H1 (cell line): ENCODE measurements at regions of chr1 and their contacts with region 1.

Region 1: DNA sequence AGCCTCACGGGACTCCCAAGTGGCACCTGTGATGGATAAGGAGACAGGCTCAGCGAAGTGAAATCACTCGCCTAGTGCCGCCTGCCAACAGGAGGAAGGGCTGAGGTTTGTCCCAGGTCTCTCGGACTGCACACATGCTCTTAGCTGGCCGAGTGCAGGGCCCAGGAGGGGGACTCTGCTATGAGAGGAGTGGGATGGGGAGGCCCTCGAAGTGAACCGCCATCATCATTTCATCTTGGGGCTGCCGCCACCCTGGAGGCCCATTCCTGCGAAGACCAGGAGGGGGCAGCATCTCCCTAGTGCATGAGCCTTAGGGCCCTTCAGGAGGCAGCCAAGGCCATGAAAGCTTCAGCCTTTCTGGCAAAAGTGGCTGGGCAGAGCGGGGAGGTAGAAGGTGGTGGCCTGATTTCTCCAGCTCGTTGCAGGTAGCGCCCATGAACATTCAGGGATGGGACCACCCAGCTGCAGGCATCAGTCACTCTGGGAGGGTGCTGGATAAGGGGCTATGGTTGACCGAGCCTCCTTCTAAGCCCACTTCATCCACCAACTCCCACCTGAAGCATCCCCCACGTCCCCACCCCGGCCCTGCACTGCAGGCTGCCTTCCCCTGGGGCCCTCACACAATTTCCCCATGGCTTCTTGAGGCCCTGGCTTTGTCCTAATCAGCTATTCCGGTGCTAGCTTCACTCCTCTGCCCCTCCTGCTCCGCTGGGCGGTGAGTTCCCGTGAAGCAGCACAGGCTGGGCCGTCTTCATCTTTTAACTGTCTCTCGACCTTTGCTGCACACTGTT is 17.2 kb upstream of the RASSF5 start:
- DNase-seq: peak; percentile 56 to 97
- H3K4me3 ChIP-seq: no peak overlapping the region
- H3K27ac ChIP-seq: no peak overlapping the region
- H3K4me1 ChIP-seq: no peaks in the 10 kb centered on the region
- H3K27me3 ChIP-seq: no peaks in the 10 kb centered on the region
- CTCF ChIP-seq: peak; percentile 96 to 99 (median 98)
- EP300 ChIP-seq: no peak
- POLR2A ChIP-seq: no peak
- RAD21 ChIP-seq: peak; percentile 95 to 97

Region 2: DNA sequence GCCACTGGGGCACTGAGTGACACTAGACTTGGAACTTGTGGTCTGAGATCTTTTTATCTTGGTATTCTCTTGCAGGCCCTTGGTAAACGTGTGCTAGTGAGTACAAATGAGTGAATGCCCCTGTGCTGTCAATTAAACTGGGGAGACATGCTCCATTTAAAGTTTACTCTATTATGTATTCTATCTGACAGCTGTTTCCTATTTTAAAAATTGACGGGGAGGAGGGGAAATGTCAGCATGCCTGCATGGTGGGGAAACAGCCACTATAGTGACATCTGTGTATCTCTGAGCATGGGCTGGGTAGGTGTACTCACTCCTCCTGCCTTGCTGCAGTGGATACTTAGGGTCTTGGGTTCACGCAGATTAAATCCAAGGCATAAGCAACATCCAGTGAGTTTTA is 78.9 kb before region 1 on chr1:
- CTCF ChIA-PET with region 1: no interaction called
- POLR2A ChIA-PET with region 1: no interaction called
- DNase-seq: no peak
- H3K4me3 ChIP-seq: no peak overlapping the region
- H3K27ac ChIP-seq: no peak overlapping the region
- H3K4me1 ChIP-seq: no peaks in the 10 kb centered on the region
- H3K27me3 ChIP-seq: peaks cover 0 to 1% (median 0%) of the 10 kb centered on the region in 4 experiments; a peak in 1 of 7 replicates
- CTCF ChIP-seq: no peak
- EP300 ChIP-seq: no peak
- POLR2A ChIP-seq: no peak
- RAD21 ChIP-seq: no peak

Region 3: DNA sequence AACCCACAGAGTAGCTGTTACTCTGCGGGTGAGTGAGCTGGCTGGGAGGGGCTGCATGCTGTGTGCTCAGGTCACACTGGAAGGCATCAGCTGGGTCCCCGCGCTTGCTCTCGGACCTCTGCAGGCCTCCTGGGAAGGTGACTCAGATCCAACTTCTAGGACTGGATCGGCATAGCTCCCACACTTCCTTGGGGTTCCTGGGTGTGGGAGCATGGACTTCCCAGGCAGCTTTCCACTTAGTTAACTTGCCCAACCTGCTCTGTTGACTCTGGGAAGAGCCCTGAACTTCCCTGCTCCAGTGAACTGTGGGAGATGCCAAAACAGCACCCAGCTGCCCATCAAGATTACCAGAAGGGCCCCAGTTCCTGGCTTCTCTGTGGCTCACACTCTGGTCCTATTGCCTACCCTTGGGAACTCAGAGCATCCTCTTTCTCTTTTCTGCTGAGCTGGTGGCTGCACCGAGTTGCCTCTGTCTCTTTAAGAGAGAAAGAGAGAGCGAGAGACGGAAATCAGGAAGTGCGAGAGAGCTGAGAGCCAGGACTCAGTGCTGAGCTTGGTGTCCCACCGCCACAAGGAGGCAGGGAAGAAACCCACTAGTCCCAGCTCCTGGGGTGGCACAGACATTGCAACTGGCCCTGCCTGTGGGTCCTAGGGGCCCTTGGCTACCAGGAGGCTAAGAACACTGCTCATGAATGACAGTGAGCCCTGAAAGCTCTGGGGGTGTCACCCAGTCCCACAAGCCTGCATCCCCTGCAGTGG is 20.1 kb before region 1 on chr1 and contains the start of gene IKBKE:
- CTCF ChIA-PET with region 1: interaction called, 24 read pairs
- POLR2A ChIA-PET with region 1: no interaction called
- DNase-seq: peak in 1 of 2 experiments; percentile 68
- H3K4me3 ChIP-seq: peak within 1 kb of the TSS; percentile 31 to 65 (median 51)
- H3K27ac ChIP-seq: no peak within 1 kb of the TSS
- H3K4me1 ChIP-seq: peaks cover 3 to 47% (median 25%) of the 10 kb centered on the region in 4 experiments
- H3K27me3 ChIP-seq: peaks cover 0 to 3% (median 0%) of the 10 kb centered on the region in 4 experiments; a peak in 2 of 7 replicates
- CTCF ChIP-seq: peak in 1 of 3 experiments; percentile 18; a peak in 1 of 4 replicates
- EP300 ChIP-seq: no peak
- POLR2A ChIP-seq: no peak
- RAD21 ChIP-seq: no peak
- total RNA-seq, gene IKBKE: 8.6 and 9.8 TPM in 2 replicates

Region 4: DNA sequence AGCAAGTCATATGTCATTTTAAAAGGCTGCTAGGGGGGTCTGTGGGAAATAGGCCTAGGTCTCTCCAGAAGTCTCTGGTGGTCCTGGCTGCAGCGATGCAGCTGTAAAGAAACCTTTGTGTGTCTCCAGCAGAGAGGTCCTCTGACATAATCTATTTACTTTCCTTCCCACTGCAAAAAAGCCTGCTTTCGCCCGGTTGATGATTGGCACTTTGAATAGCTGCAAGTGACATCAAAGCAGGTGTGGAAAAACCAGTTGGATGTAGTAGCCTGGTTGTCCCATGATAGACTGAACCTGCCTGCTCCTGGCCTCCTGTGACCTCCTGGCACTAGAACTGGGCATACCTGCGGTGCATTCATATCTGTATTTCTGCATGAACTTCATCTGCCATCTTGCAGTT is 31.0 kb after region 1 on chr1:
- CTCF ChIA-PET with region 1: interaction called, 12 read pairs
- POLR2A ChIA-PET with region 1: no interaction called
- DNase-seq: no peak
- H3K4me3 ChIP-seq: no peak overlapping the region
- H3K27ac ChIP-seq: no peak overlapping the region
- H3K4me1 ChIP-seq: no peaks in the 10 kb centered on the region
- H3K27me3 ChIP-seq: no peaks in the 10 kb centered on the region
- CTCF ChIP-seq: no peak
- EP300 ChIP-seq: no peak
- POLR2A ChIP-seq: no peak
- RAD21 ChIP-seq: no peak

Region 5: DNA sequence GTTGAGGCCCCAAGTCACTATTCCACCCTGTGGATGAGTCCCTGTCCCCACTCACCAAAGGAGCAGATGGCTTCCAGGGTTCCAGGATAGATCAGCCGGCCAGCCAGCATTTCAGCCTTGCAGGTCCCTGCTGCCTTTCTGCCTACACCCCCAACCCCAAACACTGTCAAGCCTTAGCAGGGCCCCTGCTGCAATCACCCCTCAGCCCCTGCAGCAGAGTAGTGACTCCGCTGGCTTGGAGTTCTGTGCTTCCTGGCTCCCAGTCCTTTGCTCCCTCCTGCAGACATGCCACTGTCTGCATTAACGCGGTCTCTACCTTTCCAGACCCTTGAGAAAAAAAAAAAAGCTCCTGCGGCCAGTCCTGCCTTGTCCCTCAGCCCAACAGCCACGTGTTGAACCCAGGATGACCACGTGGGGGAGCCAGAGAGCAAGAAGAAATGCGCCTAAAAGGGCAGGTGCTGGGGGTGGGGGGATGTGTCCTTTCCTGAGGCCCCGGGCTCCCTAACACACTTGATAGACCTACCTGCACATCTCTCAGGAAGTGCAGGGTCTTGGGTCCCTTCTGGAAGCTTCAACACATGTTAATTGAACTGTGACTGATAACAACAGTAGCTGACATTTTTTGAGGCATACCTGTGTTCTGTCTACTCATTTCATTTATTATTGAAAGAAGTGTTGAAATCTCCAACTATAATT is 54.5 kb after region 1 on chr1:
- CTCF ChIA-PET with region 1: interaction called, 34 read pairs
- POLR2A ChIA-PET with region 1: interaction called, 4 read pairs
- DNase-seq: peak; percentile 50 to 99
- H3K4me3 ChIP-seq: no peak overlapping the region
- H3K27ac ChIP-seq: no peak overlapping the region
- H3K4me1 ChIP-seq: peaks cover 0 to 3% (median 2%) of the 10 kb centered on the region in 4 experiments; a peak in 2 of 7 replicates
- H3K27me3 ChIP-seq: no peaks in the 10 kb centered on the region
- CTCF ChIP-seq: peak; percentile 84 to 93 (median 92)
- EP300 ChIP-seq: peak in 1 of 2 experiments; percentile 58; a peak in 1 of 3 replicates
- POLR2A ChIP-seq: no peak
- RAD21 ChIP-seq: peak; percentile 80 to 88

Region 6: DNA sequence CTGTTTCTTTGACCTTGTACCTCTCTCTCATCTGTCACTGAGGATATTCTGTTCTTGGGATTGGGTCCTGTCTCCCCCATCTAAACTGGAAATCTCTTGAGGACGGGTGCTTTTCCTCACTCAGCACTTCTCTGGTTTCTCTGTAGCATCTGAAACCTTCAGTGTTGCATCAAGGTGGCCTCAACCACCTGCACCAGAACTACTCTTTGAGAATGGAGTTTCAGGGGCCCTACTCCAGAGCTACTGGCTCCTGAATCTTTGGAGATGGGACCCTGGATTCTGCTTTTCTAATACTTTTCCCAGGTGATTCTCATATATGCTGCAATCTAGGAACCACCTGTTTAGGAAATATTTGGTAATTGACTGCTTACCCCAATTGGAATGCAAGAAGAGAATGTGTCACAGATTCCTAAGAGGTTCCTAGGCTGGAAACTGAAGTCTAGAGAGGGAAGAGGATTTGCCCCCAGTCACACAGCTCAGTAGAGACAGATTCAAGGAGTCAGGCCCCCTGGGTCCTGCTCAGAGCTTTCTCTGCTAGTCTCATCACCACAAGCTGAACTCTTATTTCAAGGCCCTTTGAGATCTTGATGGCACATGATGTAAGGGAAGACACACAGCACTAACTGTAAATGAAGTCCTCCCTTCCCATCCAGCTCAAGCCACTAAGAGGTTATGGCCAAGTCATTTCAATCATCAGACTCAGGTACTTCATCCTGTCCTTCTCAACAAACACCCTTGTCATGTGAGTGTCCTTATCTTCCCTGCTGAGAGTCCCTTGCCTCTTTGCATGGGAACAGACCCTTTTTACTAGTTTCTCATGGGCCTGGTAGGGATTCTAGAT is 73.4 kb after region 1 on chr1:
- CTCF ChIA-PET with region 1: interaction called, 20 read pairs
- POLR2A ChIA-PET with region 1: no interaction called
- DNase-seq: no peak
- H3K4me3 ChIP-seq: no peak overlapping the region
- H3K27ac ChIP-seq: no peak overlapping the region
- H3K4me1 ChIP-seq: peaks cover 0 to under 1% (median 0%) of the 10 kb centered on the region in 4 experiments; a peak in 4 of 7 replicates
- H3K27me3 ChIP-seq: peaks cover 0 to 6% (median 2%) of the 10 kb centered on the region in 4 experiments; a peak in 3 of 7 replicates
- CTCF ChIP-seq: no peak
- EP300 ChIP-seq: no peak
- POLR2A ChIP-seq: no peak
- RAD21 ChIP-seq: no peak

Region 7: GRCh38 chr1:206590025-206590758 is 100.0 kb after region 1 on chr1:
- CTCF ChIA-PET with region 1: interaction called, 239 read pairs
- POLR2A ChIA-PET with region 1: interaction called, 3 read pairs
- DNase-seq: no peak
- H3K4me3 ChIP-seq: no peak overlapping the region
- H3K27ac ChIP-seq: no peak overlapping the region
- H3K4me1 ChIP-seq: no peaks in the 10 kb centered on the region
- H3K27me3 ChIP-seq: no peaks in the 10 kb centered on the region
- CTCF ChIP-seq: peak in 2 of 3 experiments; percentile 49 to 69; a peak in 3 of 4 replicates
- EP300 ChIP-seq: no peak
- POLR2A ChIP-seq: no peak
- RAD21 ChIP-seq: peak; percentile 40 to 54; a peak in 3 of 4 replicates

Region 8: DNA sequence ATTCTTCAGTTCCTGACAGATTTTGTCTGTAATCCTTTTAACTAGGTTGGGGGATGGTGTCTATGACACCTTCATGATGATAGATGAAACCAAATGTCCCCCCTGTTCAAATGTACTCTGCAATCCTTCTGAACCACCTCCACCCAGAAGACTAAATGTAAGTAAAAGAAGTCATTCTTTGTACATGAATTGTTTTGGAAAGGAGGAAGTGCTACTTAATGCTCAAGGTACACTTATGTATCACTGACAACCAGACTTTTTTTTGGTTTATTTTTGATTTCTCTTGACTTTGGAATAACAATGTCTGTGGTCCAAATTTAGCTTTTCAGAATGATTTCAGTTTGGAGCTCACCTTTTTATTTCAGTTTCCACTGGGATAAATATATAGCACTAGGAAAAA is 147.4 kb after region 1 on chr1:
- CTCF ChIA-PET with region 1: no interaction called
- POLR2A ChIA-PET with region 1: no interaction called
- DNase-seq: no peak
- H3K4me3 ChIP-seq: no peak overlapping the region
- H3K27ac ChIP-seq: no peak overlapping the region
- H3K4me1 ChIP-seq: peaks cover 0 to 10% (median 4%) of the 10 kb centered on the region in 4 experiments; a peak in 4 of 7 replicates
- H3K27me3 ChIP-seq: peaks cover 0 to 4% (median 0%) of the 10 kb centered on the region in 4 experiments; a peak in 2 of 7 replicates
- CTCF ChIP-seq: no peak
- EP300 ChIP-seq: no peak
- POLR2A ChIP-seq: no peak
- RAD21 ChIP-seq: no peak